Heart left ventricle (tissue), 16 donors: ENCODE measurements at regions of chr3 and their contacts with region 1.

Region 1: DNA sequence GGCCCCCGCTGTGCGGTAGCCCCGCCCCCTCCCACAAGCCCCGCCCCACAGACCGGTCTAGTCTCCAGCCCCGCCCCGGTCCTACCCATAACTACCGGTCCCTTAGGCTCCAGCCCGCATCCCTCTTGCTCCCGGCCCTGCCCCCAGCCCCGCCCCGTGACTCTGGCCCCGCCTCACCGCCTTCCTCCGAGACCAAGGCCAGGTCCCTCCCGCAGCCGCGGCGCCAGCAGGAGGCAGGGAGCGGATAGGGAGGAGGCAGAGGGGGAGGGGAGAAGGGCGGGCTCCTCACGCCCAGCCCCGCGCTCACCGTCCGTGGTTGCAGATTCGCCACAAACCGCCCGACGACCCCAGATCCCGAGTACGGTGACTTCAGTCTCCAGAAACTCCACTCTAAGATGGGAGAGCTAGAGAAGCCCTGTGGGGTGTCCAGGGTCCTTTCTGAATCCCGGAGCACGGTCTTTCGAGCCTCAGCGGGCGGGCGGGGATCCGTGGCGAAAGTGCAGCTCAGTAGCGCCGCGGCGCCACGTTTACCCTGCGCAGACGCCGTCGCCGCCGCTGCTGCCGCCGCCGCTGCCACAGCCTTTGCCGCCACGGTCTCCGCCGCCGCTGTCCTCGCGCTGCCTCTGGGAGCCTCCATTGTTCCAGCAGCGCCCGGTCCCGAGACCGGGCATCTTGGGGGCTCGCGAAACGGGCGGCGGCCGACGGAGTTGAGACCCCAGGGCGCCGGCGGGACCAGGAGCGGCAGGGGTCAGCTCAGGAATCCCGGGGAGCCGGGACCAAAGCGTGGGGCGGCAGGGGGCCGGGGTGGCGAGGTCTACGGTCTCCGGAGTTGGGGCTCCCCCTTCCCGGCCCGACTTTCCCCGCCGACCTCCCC is at the start of gene BRPF1:
- DNase-seq: peak; percentile 99 to 100 (median 100)
- ATAC-seq: peak; percentile 99 to 100 (median 99)
- H3K4me3 ChIP-seq: peak within 1 kb of the TSS; percentile 82 to 100 (median 98)
- H3K27ac ChIP-seq: peak within 1 kb of the TSS; percentile 91 to 100 (median 97)
- H3K4me1 ChIP-seq: peaks cover 9 to 52% (median 24%) of the 10 kb centered on the region in 12 donors
- H3K27me3 ChIP-seq: no peaks in the 10 kb centered on the region
- CTCF ChIP-seq: peak in 5 of 12 donors; percentile 8 to 28 (median 21)
- POLR2A ChIP-seq: peak in 1 of 2 donors; percentile 61
- total RNA-seq, gene BRPF1: 9.0 to 17.8 (median 10.6) TPM

Region 2: DNA sequence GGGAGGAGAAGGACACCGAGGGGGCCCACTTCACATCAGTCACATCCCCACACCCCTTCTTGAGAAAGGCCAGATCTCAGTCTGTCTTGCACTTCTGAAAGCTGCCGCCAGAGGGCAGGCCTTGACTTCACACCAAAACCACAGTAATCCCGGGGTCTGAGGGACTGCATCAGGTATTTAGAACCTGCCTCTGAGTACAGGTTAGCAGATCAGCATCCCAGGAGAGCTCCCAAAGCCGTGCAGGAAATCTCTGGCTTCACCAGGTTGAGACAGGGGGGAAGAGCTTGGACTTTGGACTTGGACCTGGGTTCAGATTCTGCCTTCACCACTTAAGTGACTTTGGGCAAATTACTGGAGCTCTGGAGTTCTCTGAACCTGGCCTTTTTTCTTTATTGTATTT is 228.2 kb before region 1 on chr3:
- intact Hi-C with region 1: loop called in 5 of 10 experiments (anchors 5 to 10 kb)
- DNase-seq: peak; percentile 27 to 77 (median 46)
- ATAC-seq: peak in 2 of 4 donors; percentile 35 to 48
- H3K4me3 ChIP-seq: no peak overlapping the region
- H3K27ac ChIP-seq: no peak overlapping the region
- H3K4me1 ChIP-seq: peaks cover 0 to 13% (median 7%) of the 10 kb centered on the region in 12 donors
- H3K27me3 ChIP-seq: peaks cover 0 to 37% (median 15%) of the 10 kb centered on the region in 9 donors
- CTCF ChIP-seq: peak; percentile 80 to 89 (median 86)
- POLR2A ChIP-seq: no peak